Activated CD8-positive, alpha-beta T cell treated with anti-CD3 and anti-CD28 coated beads, Interleukin-2, amount 10 ng/mL, durations not matched to agents 7 days and 5 days (primary cell): ENCODE measurements at regions of chr19 and their contacts with region 1.

Region 1: DNA sequence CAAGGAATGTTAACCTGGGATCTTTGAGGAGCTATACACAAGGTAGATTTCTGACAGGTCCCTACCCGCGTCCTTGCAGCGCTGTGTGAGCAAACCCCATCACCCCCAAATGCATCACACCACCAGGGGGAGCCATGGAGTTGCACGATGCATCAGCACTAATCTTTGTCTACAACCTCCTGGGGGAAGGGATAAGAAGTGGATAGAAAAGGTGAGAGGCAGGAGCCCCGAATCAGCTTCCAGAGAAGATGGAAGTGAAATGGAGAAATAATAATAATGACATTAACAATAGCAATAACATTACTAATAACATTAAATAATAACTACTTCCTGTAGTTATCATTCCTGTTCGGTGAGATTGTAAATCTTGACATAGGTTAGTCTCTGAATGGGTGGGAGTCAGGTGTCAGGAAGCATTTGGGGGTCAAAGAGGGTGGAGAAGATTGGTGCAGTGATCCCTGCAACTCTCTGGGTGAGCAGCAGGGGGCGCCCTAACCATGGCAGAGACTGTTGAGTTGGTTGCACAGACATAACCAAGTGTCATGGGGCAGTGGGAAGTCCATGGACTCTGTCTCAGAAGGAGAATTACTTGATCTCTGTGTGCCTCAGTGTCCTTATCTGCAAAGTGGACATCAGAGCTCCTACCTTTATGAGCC is 16.5 kb downstream of the SIGLEC7 start:
- DNase-seq: peak; percentile 89
- ATAC-seq: peak; percentile 86
- H3K4me3 Mint-ChIP-seq: no peak overlapping the region
- H3K27ac Mint-ChIP-seq: no peak overlapping the region
- H3K4me1 Mint-ChIP-seq: peaks cover 35% of the 10 kb centered on the region
- H3K27me3 Mint-ChIP-seq: peaks cover 27% of the 10 kb centered on the region

Region 2: DNA sequence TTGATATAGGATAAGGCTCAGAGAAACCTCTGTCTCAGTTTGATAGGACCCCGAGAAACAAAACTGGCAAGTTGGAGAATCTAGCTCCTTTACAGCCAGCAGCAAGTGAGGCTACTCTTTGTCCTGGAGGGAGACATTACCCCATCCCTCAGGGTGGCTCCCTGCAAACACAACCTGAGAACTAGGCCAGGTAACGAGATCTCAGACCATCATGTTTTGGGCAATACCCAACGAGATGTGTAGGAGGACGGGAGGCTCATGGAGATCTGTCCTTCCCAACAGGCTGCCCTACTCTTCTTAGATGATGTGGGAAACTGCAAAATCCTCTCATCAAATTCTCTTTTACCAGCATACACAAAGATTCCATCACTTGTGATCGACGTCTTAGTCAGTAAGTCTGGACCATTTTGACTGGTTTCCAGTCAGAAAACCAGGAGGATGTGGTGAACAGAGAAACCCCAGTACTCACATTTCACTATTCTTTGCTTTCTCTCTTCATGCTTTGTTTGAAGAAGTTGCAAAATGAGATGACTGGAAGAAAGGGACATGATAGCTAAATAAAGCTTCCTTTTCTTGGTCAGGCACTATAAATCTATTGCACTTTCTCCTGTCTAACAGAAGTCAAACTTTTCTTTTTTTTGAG is 44.4 kb before region 1 on chr19:
- CTCF ChIA-PET with region 1: interaction called, 11 read pairs
- POLR2A ChIA-PET with region 1: no interaction called
- DNase-seq: peak; percentile 51
- ATAC-seq: peak; percentile 34
- H3K4me3 Mint-ChIP-seq: no peak overlapping the region
- H3K27ac Mint-ChIP-seq: peak overlapping the region; percentile 64
- H3K4me1 Mint-ChIP-seq: peaks cover 46% of the 10 kb centered on the region
- H3K27me3 Mint-ChIP-seq: peaks cover 2% of the 10 kb centered on the region

Region 3: GRCh38 chr19:51147663-51148062 is 10.9 kb before region 1 on chr19:
- CTCF ChIA-PET with region 1: interaction called, 33 read pairs
- POLR2A ChIA-PET with region 1: no interaction called
- DNase-seq: no peak
- ATAC-seq: no peak
- H3K4me3 Mint-ChIP-seq: no peak overlapping the region
- H3K27ac Mint-ChIP-seq: no peak overlapping the region
- H3K4me1 Mint-ChIP-seq: no peaks in the 10 kb centered on the region
- H3K27me3 Mint-ChIP-seq: peaks cover 31% of the 10 kb centered on the region